Activated CD4-positive, alpha-beta T cell treated with anti-CD3 and anti-CD28 coated beads for 36 hours (primary cell): ENCODE measurements at regions of chr10 and their contacts with region 1.

Region 1: DNA sequence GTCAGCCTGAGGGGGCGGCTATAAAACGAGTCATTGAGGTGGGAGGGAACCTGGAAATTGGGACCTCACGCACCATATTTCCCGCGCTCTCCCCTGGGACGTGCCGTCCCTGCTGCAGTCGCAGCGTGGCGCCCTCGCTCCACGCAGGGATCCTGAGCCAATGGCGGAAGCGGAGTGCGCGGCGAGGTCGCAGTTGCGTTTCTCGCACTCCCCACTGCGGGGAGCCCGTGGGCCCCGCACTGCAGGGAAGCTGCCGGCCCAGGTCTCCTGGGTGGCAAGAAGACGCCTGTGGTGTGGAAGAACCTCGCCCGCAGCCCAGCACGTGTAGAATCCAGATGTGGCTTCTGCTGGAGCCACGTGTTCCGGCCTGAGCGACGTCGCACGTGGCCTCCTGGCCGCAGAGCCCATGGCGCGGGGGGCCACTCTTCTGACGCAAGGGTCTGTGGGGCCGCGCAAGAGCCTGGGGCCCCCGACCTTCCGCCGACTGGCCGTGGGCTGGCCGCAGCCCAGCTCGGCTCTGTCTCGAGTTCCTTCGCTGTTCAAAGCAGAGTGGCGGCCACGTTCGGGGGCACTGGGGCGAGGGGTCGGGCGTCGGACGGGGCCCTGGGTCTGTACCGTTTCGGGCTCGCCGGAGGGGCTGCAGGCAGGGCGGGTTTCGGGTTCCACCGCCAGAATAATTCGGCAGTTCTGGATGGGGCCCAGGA is 26.4 kb downstream of the HIF1AN start:
- DNase-seq: peak; percentile 90
- ATAC-seq: peak; percentile 95
- H3K4me3 Mint-ChIP-seq: no peak overlapping the region
- H3K27ac Mint-ChIP-seq: no peak overlapping the region
- H3K4me1 Mint-ChIP-seq: peaks cover 11% of the 10 kb centered on the region
- H3K27me3 Mint-ChIP-seq: peaks cover 24% of the 10 kb centered on the region

Region 2: DNA sequence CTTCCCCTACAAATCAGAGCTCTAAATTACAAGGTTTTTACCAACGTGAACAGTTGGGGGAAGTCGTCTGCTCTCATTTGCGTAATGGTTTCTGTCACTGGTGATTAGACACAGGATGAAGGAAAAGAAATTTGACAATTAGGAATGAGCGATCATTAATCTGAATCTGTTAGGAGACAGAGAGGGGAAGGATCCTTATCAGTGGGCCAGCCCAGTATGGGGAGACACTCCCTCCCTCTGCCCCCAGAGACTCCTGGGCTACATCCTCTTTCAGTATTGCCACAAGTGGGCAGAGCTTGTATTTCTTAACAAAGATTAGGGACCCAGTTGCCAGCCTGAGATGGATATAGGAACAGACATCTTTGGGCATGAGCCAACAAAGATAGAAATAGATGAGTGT is 11.0 kb before region 1 on chr10:
- CTCF ChIA-PET with region 1: interaction called, 18 read pairs
- POLR2A ChIA-PET with region 1: interaction called, 3 read pairs
- intact Hi-C with region 1: no loop called
- DNase-seq: no peak
- ATAC-seq: no peak
- H3K4me3 Mint-ChIP-seq: no peak overlapping the region
- H3K27ac Mint-ChIP-seq: no peak overlapping the region
- H3K4me1 Mint-ChIP-seq: no peaks in the 10 kb centered on the region
- H3K27me3 Mint-ChIP-seq: no peaks in the 10 kb centered on the region

Region 3: DNA sequence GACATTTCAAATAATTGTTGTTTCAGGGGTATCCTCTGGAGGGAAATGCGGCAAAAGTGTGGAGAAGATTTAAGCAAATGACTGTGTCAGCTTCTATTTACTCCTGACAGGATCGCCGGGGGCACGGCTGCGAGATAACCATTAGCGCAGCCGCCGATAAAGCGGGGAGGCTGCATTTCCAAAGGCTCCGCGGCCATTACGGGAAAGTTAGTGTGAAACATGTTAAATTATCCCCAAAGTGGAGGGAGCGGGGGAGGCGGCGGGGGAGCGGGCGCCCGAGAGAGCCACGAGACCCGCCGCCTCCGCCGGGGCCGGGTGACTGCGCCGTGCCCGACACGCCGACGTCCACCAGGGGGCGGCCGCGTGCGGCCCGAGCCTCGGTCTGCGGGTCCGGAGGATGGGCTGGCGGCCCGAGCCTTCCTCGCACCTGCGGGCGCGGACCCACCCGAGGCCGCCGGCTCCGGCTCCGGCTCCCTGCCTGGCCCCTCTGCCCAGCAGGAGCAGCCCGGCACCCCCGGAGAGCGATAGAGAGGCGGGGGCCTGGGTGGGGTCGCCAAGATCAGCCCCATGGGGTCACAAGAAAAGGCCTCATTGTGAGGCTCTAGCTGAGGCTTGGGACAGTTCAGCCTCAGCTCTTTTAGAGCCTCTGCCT is 108.8 kb after region 1 on chr10:
- CTCF ChIA-PET with region 1: interaction called, 5 read pairs
- POLR2A ChIA-PET with region 1: no interaction called
- intact Hi-C with region 1: loop called in 1 of 2 experiments (anchors 1 kb)
- DNase-seq: peak; percentile 81
- ATAC-seq: peak; percentile 95
- H3K4me3 Mint-ChIP-seq: no peak overlapping the region
- H3K27ac Mint-ChIP-seq: no peak overlapping the region
- H3K4me1 Mint-ChIP-seq: peaks cover 3% of the 10 kb centered on the region
- H3K27me3 Mint-ChIP-seq: peaks cover 64% of the 10 kb centered on the region

Region 4: GRCh38 chr10:100827819-100828737 is 265.9 kb after region 1 on chr10:
- CTCF ChIA-PET with region 1: no interaction called
- POLR2A ChIA-PET with region 1: no interaction called
- intact Hi-C with region 1: loop called in 1 of 2 experiments (anchors 2 kb)
- DNase-seq: peak; percentile 62
- ATAC-seq: peak; percentile 48
- H3K4me3 Mint-ChIP-seq: peak overlapping the region; percentile 70
- H3K27ac Mint-ChIP-seq: no peak overlapping the region
- H3K4me1 Mint-ChIP-seq: peaks cover 24% of the 10 kb centered on the region
- H3K27me3 Mint-ChIP-seq: peaks cover 66% of the 10 kb centered on the region

Region 5: DNA sequence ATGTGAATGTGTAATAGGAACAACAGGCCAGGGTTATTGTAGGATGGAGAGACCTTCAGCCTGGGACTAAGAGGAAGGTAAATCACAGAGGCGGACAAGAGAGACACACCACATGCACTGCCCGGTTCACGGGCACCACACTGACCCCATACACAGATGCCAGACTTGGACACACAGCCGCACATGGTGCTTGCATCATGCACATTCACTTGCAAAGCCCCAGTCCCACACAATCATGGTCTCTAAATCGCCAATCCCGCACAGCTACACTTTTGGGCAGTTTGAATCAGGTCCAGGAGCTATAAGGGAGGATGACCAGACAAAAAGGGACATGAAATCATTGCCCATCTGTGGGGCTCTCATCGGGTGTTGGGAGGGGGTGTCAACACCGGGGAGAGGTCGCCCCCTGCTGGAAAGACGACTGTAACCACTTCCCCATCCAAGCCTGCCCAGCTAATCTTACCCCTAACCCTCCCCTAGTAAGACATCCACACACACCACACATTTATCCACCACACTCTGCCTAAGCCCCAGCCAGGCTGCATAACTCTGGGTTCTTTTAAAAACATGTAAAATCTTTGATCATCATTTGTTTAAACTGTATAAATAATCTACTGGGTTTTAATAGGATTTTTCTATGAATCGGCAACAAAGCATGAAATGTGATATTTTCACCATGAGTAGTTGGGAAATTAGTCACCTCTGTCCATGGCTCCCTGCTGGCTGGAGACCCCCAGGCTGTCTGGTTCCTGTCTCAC is 310.1 kb after region 1 on chr10:
- CTCF ChIA-PET with region 1: interaction called, 14 read pairs
- POLR2A ChIA-PET with region 1: no interaction called
- intact Hi-C with region 1: loop called (anchors 1 kb)
- DNase-seq: peak; percentile 89
- ATAC-seq: peak; percentile 97
- H3K4me3 Mint-ChIP-seq: no peak overlapping the region
- H3K27ac Mint-ChIP-seq: no peak overlapping the region
- H3K4me1 Mint-ChIP-seq: no peaks in the 10 kb centered on the region
- H3K27me3 Mint-ChIP-seq: peaks cover 9% of the 10 kb centered on the region

Region 6: GRCh38 chr10:100878291-100878910 is 316.2 kb after region 1 on chr10:
- CTCF ChIA-PET with region 1: interaction called, 15 read pairs
- POLR2A ChIA-PET with region 1: no interaction called
- intact Hi-C with region 1: loop called in 1 of 2 experiments (anchors 1 kb)
- DNase-seq: peak; percentile 63
- ATAC-seq: peak; percentile 86
- H3K4me3 Mint-ChIP-seq: no peak overlapping the region
- H3K27ac Mint-ChIP-seq: no peak overlapping the region
- H3K4me1 Mint-ChIP-seq: peaks cover 4% of the 10 kb centered on the region
- H3K27me3 Mint-ChIP-seq: peaks cover 7% of the 10 kb centered on the region